ENCODE measurements at regions of chr9 and their contacts with region 1.

Region 1: GRCh38 chr9:21326526-21327139 is 8.6 kb downstream of the KLHL9 start:
- DNase-seq: peak; percentile 32
- ATAC-seq: peak; percentile 89
- H3K4me3 ChIP-seq: no peak overlapping the region
- H3K27ac ChIP-seq: no peak overlapping the region
- H3K4me1 ChIP-seq: peaks cover 2% of the 10 kb centered on the region
- H3K27me3 ChIP-seq: no peaks in the 10 kb centered on the region
- CTCF ChIP-seq: peak; percentile 46 to 79 (median 59); a peak in 5 of 6 replicates
- EP300 ChIP-seq: no peak
- POLR2A ChIP-seq: no peak
- RAD21 ChIP-seq: peak; percentile 95

Region 2: GRCh38 chr9:20972684-20973083 is 353.9 kb before region 1 on chr9:
- CTCF ChIA-PET with region 1: no interaction called
- POLR2A ChIA-PET with region 1: no interaction called
- RAD21 ChIA-PET with region 1: no interaction called
- SMC1A ChIA-PET with region 1: no interaction called
- in situ Hi-C with region 1: no loop called
- intact Hi-C with region 1: no loop called
- DNase-seq: no peak
- ATAC-seq: no peak
- H3K4me3 ChIP-seq: no peak overlapping the region
- H3K27ac ChIP-seq: no peak overlapping the region
- H3K4me1 ChIP-seq: no peaks in the 10 kb centered on the region
- H3K27me3 ChIP-seq: no peaks in the 10 kb centered on the region
- CTCF ChIP-seq: no peak
- EP300 ChIP-seq: no peak
- POLR2A ChIP-seq: no peak
- RAD21 ChIP-seq: no peak

Region 3: DNA sequence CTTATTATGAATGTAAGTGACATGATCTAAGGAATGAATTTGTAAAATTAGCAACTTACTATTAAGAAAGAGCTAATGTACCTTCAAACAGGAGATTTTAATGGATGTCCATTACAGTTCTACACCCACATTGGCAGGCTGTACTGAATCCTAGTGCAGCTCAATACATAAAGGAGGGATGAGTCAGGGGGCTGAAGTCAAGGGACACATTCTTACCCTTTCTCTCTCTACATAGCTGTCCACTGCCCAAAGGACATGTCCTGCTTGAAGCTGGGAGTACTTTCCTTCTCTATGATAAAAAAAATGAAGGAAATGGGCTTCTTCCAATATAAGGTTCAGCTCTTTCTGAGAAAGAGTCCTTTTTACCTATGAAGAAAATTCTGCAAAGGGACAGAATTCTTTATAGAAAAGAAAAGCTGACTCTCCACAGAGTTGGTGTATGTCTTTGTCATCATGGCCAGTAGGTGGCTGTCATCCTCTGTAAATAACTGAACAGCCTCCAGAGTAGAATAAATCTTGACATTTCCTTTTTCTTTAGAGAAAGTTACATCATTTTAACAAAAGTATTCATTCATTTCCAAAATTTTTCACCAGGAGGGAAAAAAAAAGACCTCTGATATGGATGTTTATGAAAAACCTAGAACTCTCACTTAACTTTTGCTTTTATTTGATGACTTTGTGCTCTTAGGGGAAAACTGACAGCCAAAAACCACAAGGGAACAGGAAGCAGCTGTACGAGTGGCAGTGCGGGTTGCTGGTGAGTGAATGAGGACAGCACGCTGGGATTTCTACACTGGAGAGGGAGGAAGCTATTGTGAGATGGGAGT is 73.7 kb before region 1 on chr9:
- CTCF ChIA-PET with region 1: interaction called, 16 read pairs
- POLR2A ChIA-PET with region 1: interaction called, 3 read pairs
- RAD21 ChIA-PET with region 1: interaction called, 9 read pairs
- SMC1A ChIA-PET with region 1: interaction called, 13 read pairs
- in situ Hi-C with region 1: no loop called
- intact Hi-C with region 1: no loop called
- DNase-seq: no peak
- ATAC-seq: peak; percentile 91
- H3K4me3 ChIP-seq: no peak overlapping the region
- H3K27ac ChIP-seq: no peak overlapping the region
- H3K4me1 ChIP-seq: no peaks in the 10 kb centered on the region
- H3K27me3 ChIP-seq: no peaks in the 10 kb centered on the region; a peak in 3 of 4 replicates
- CTCF ChIP-seq: peak; percentile 60 to 63 (median 62)
- EP300 ChIP-seq: no peak
- POLR2A ChIP-seq: no peak
- RAD21 ChIP-seq: peak; percentile 62

Region 4: GRCh38 chr9:21381448-21382339 is 55.1 kb after region 1 on chr9:
- CTCF ChIA-PET with region 1: interaction called, 65 read pairs
- POLR2A ChIA-PET with region 1: interaction called, 12 read pairs
- RAD21 ChIA-PET with region 1: interaction called, 37 read pairs
- SMC1A ChIA-PET with region 1: interaction called, 205 read pairs
- in situ Hi-C with region 1: no loop called
- intact Hi-C with region 1: no loop called
- DNase-seq: peak; percentile 94
- ATAC-seq: peak; percentile 92
- H3K4me3 ChIP-seq: peak overlapping the region; percentile 25; the same call in 1 of the 2 replicates
- H3K27ac ChIP-seq: peak overlapping the region; percentile 69
- H3K4me1 ChIP-seq: peaks cover 22% of the 10 kb centered on the region
- H3K27me3 ChIP-seq: no peaks in the 10 kb centered on the region
- CTCF ChIP-seq: no peak
- EP300 ChIP-seq: peak; percentile 92 to 93
- POLR2A ChIP-seq: no peak
- RAD21 ChIP-seq: 0 out of 2 replicates have a peak, but pooled peaks have one; percentile 6

Region 5: GRCh38 chr9:21402386-21403251 is 76.0 kb after region 1 on chr9:
- CTCF ChIA-PET with region 1: interaction called, 49 read pairs
- POLR2A ChIA-PET with region 1: interaction called, 4 read pairs
- RAD21 ChIA-PET with region 1: interaction called, 29 read pairs
- SMC1A ChIA-PET with region 1: interaction called, 30 read pairs
- in situ Hi-C with region 1: no loop called
- intact Hi-C with region 1: no loop called
- DNase-seq: no peak
- ATAC-seq: peak; percentile 83
- H3K4me3 ChIP-seq: peak overlapping the region; percentile 53; the same call in 1 of the 2 replicates
- H3K27ac ChIP-seq: no peak overlapping the region
- H3K4me1 ChIP-seq: no peaks in the 10 kb centered on the region
- H3K27me3 ChIP-seq: peaks cover 0 to 2% of the 10 kb centered on the region in 2 experiments; a peak in 2 of 4 replicates
- CTCF ChIP-seq: peak; percentile 2 to 32 (median 16); a peak in 2 of 6 replicates
- EP300 ChIP-seq: no peak
- POLR2A ChIP-seq: no peak
- RAD21 ChIP-seq: no peak

Region 6: DNA sequence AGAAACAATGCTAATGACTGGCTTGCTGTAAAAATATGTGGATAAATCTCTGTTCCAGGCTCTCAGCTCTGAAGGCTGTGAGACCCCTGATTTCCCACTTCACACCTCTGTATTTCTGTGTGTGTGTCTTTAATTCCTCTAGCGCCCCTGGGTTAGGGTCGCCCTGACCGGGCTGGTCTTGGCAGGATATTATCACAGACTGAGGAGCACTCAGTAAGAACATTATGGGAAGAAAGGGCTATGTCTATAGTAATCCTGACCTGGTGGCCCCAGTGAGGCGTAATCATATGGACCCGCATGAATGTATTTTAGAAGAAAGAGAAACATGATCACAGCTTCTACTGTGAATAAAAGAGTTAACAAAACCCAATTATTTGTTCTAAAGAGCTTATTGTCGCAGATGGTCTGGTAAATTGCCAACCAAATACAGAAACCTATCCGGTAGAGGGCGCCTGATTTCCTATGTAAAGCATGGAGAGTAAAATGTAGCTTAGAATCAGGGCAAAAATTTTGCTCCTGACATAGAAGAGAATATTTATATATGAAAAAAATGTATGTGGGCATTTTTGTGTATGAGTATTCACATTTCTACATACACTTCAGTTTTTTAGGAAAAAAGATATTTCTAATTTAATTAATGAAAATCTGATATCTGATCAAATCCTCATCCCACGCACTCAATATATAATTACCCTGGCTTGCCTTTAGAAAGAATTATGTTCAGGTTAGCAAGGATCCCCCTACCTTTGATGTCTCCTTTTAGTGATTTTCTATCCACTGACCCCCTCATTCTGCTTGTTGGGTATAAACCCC is 107.8 kb after region 1 on chr9:
- CTCF ChIA-PET with region 1: interaction called, 49 read pairs
- POLR2A ChIA-PET with region 1: no interaction called
- RAD21 ChIA-PET with region 1: interaction called, 14 read pairs
- SMC1A ChIA-PET with region 1: interaction called, 24 read pairs
- in situ Hi-C with region 1: no loop called
- intact Hi-C with region 1: no loop called
- DNase-seq: no peak
- ATAC-seq: peak; percentile 47; the same call in 1 of the 3 replicates
- H3K4me3 ChIP-seq: no peak overlapping the region
- H3K27ac ChIP-seq: no peak overlapping the region
- H3K4me1 ChIP-seq: peaks cover 6% of the 10 kb centered on the region; the same call in 1 of the 2 replicates
- H3K27me3 ChIP-seq: no peaks in the 10 kb centered on the region
- CTCF ChIP-seq: peak; percentile 46 to 51 (median 49); a peak in 5 of 6 replicates
- EP300 ChIP-seq: no peak
- POLR2A ChIP-seq: no peak
- RAD21 ChIP-seq: peak; percentile 38

Region 7: GRCh38 chr9:21455320-21455719 is 128.7 kb after region 1 on chr9:
- CTCF ChIA-PET with region 1: interaction called, 49 read pairs
- POLR2A ChIA-PET with region 1: no interaction called
- RAD21 ChIA-PET with region 1: interaction called, 44 read pairs
- SMC1A ChIA-PET with region 1: interaction called, 57 read pairs
- in situ Hi-C with region 1: loop called (anchors 10 kb)
- intact Hi-C with region 1: loop called (anchors 1 kb)
- DNase-seq: no peak
- ATAC-seq: peak; percentile 98
- H3K4me3 ChIP-seq: no peak overlapping the region
- H3K27ac ChIP-seq: no peak overlapping the region
- H3K4me1 ChIP-seq: no peaks in the 10 kb centered on the region
- H3K27me3 ChIP-seq: 0 out of 4 replicates have a peak, but pooled peaks cover 0 to 2% of the 10 kb centered on the region in 2 experiments
- CTCF ChIP-seq: peak; percentile 81 to 87 (median 86)
- EP300 ChIP-seq: no peak
- POLR2A ChIP-seq: no peak
- RAD21 ChIP-seq: peak; percentile 89

Region 8: DNA sequence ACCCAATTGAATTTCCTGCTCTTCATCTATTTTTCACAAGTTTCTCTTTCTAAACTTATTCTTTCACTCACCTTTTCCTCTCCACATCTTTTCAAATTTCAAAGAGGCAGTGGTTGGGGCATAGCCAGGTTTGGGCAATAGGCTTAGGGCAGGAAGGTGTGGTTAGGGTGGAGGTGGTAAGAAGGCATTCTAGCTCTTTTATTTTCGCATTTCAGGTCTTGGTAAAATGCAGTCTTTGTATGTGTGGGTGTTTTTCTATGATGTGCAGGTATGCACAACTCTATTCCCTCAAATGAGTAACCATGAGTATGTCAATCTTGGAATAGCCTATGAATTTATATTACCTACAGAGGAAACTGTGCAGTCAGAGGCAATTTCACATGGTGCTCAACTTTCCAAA is 285.3 kb after region 1 on chr9:
- CTCF ChIA-PET with region 1: no interaction called
- POLR2A ChIA-PET with region 1: no interaction called
- RAD21 ChIA-PET with region 1: no interaction called
- SMC1A ChIA-PET with region 1: no interaction called
- in situ Hi-C with region 1: no loop called
- intact Hi-C with region 1: no loop called
- DNase-seq: no peak
- ATAC-seq: no peak
- H3K4me3 ChIP-seq: no peak overlapping the region
- H3K27ac ChIP-seq: no peak overlapping the region
- H3K4me1 ChIP-seq: no peaks in the 10 kb centered on the region
- H3K27me3 ChIP-seq: no peaks in the 10 kb centered on the region
- CTCF ChIP-seq: no peak
- EP300 ChIP-seq: no peak
- POLR2A ChIP-seq: no peak
- RAD21 ChIP-seq: no peak

Measured in GM12878 (cell line).